Cardiac septum (tissue), 1 donor: ENCODE measurements at regions of chr15 and their contacts with region 1.

Region 1: DNA sequence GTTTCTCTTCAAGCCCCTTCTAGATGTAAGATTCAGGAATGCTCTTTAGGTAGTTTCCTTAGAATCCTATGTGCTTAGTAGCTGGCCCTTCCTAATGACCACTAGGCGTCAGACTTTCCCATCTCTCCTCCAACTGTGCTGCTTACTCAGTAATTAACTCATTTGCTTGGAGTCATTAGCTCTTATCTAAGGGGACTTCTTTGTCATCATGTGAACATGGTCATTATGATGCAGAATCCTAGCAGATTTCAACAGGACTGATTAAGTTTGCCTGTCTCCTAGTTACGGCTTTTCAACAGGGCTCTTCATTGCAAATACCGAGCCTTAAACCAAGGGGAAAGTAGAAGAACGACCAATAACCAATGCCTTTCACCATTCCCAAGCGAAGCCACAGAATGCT is 46.4 kb downstream of the GJD2 start:
- DNase-seq: no peak

Region 2: DNA sequence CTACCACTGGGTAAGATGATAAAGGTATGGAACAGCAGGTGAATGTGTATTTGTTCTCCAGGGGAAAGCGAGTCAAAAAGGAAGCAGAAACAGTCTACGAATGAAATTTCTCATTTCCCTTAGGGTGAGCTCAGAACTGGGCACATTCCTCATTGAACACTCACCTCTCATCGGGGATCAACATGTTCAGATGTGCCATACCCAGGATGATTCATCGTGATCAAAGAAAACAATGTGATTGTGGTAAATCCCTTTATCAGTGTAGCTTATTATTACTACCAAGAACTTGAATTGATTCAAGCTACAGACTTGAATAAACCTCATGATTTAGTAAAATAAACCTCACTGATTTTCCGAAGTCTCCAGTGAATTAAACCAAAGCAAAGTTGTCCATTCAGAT is 25.7 kb before region 1 on chr15:
- intact Hi-C with region 1: no loop called
- DNase-seq: no peak

Region 3: DNA sequence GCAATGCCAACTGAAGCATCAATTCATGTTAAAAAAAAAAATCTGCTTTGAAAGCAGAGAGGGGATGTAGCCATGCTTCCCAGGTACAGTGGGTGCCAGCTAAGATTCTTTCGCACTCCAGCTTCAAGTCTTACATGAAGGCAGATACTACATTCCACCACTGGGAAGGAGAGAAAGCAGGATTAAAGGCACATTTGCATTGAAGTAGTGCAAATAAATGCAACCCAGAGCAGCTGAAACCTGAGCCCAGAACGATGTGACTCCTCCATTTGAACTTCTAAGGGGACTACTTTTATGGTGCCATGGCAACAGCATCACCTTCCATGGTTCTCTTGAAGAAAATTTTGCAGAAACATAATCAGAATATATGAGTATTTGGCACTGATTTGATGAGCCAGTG is 65.5 kb after region 1 on chr15:
- intact Hi-C with region 1: no loop called
- DNase-seq: no peak

Region 4: GRCh38 chr15:34914317-34914716 is 205.9 kb after region 1 on chr15:
- intact Hi-C with region 1: loop called (anchors 2 kb)
- DNase-seq: no peak

Region 5: DNA sequence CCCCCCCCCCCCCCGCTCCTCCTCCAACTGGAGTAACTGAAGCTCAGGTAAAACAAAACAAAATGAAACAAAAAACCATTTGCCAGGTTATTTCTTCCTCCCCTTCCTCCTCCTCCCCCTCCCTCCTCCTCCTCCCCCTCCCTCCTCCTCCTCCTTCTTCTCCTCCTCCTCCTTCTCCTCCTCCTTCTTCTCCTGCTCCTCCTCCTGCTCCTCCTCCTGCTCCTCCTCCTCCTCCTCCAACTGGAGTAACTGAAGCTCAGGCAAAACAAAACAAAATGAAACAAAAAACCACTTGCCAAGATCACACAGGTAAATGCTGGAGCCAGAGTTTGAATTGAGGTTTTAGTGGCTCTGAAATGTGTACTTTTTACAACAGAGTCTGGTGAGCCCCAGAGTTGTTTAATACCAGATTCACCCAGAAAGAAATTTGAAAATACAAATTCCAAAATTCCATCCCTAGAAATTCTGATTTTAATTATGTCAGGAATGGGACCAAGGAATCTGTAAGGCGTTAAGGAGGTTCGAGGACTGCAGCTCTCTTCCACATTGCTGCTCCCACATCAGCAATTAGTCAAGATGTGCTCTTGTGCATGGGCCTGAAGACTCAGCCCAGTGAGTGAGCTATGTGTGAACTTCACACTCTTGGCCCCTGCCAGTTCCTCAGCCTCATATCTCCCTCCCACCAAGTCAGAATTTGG is 311.1 kb after region 1 on chr15:
- intact Hi-C with region 1: no loop called
- DNase-seq: no peak

Region 6: GRCh38 chr15:35078221-35078915 is 369.9 kb after region 1 on chr15:
- intact Hi-C with region 1: no loop called
- DNase-seq: peak; percentile 76